ENCODE measurements at regions of chr21 and their contacts with region 1.

Region 1: DNA sequence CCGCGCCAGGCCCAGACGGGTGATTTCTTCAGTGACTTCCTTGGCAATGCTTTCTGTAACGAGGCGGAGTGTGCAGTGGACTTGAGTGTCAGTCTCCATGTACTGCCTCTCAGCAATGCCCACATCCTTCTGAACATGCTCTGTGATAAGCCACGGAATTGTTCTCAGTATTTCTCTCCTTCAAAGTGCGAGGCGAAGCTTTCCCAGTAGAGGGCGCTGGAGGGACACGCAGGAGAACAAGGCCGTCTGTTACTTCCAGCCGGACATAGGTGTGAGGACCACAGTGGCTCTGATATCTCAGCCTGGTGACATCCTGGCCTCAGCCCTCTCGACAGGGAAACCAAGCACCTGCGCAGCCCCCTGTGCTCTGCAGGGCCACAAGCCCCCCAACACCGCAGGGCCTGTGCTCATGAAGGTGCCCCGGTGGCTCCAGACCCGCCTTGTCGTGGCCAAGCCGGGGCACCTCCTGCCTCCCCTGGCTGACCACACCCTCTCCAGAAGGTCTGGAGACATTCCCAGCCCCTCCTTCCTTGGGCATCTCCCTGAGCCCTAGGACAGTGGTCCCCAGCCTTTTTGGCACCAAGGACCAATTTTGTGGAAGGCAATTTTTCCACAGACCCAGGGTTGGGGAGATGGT is 46.1 kb upstream of the BACE2 start:
- DNase-seq: peak; percentile 79
- H3K4me3 ChIP-seq: no peak overlapping the region
- H3K27ac ChIP-seq: no peak overlapping the region
- H3K4me1 ChIP-seq: no peaks in the 10 kb centered on the region
- H3K27me3 ChIP-seq: no peaks in the 10 kb centered on the region
- CTCF ChIP-seq: peak; percentile 85 to 90
- POLR2A ChIP-seq: no peak

Region 2: GRCh38 chr21:41133896-41134522 is 12.1 kb after region 1 on chr21:
- CTCF ChIA-PET with region 1: interaction called, 17 read pairs
- POLR2A ChIA-PET with region 1: no interaction called
- dilution Hi-C with region 1: no loop called
- intact Hi-C with region 1: no loop called
- DNase-seq: peak; percentile 39
- H3K4me3 ChIP-seq: no peak overlapping the region
- H3K27ac ChIP-seq: no peak overlapping the region
- H3K4me1 ChIP-seq: no peaks in the 10 kb centered on the region
- H3K27me3 ChIP-seq: peaks cover 0 to 2% of the 10 kb centered on the region in 2 experiments
- CTCF ChIP-seq: peak; percentile 12 to 40
- POLR2A ChIP-seq: no peak

Region 3: DNA sequence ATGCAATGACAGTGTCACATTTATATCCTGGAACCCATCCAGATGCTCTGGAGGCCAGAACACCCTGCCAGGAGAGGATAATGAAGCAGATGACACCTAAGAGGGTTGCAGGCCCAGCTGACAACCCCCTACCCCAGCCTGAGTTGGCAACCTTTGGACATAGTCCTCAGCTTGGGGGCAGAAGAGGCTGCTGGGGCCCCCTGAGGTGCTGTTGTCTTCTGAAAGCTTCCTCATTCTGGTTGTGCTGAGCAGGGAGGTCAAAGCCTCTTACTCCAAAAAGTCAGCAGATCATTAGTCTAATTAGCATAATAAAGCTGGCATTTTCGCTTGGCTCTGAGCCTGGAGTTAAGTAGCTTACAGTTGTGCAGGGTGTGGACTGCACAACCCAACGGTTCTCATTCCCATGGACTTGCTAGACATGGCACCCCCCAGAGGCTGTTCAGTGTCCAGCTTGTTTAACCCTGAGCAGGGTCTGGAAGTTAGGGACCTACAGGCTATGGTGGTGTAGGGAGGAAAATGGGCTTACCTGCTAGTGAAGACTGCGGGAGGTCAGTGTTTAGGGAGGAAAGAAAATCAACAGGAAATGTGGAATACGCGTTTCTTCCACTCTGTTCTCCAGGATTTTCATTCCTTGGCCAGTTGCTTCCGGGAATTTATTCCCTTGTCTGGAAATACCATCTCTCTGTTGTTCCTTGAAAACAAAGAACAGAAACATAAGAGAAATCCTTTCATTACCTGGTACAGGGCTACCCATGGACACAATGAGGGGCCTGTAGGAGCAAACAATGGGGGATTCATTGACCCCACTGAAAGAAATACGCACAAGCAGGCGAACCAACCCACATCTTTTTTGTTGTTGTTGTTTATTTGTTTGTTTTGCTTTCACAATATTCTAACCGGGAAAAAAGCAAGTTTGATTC is 25.8 kb after region 1 on chr21:
- CTCF ChIA-PET with region 1: no interaction called
- POLR2A ChIA-PET with region 1: interaction called, 11 read pairs
- dilution Hi-C with region 1: no loop called
- intact Hi-C with region 1: no loop called
- DNase-seq: no peak
- H3K4me3 ChIP-seq: no peak overlapping the region
- H3K27ac ChIP-seq: no peak overlapping the region
- H3K4me1 ChIP-seq: peaks cover 3% of the 10 kb centered on the region
- H3K27me3 ChIP-seq: no peaks in the 10 kb centered on the region
- CTCF ChIP-seq: no peak
- POLR2A ChIP-seq: no peak

Region 4: DNA sequence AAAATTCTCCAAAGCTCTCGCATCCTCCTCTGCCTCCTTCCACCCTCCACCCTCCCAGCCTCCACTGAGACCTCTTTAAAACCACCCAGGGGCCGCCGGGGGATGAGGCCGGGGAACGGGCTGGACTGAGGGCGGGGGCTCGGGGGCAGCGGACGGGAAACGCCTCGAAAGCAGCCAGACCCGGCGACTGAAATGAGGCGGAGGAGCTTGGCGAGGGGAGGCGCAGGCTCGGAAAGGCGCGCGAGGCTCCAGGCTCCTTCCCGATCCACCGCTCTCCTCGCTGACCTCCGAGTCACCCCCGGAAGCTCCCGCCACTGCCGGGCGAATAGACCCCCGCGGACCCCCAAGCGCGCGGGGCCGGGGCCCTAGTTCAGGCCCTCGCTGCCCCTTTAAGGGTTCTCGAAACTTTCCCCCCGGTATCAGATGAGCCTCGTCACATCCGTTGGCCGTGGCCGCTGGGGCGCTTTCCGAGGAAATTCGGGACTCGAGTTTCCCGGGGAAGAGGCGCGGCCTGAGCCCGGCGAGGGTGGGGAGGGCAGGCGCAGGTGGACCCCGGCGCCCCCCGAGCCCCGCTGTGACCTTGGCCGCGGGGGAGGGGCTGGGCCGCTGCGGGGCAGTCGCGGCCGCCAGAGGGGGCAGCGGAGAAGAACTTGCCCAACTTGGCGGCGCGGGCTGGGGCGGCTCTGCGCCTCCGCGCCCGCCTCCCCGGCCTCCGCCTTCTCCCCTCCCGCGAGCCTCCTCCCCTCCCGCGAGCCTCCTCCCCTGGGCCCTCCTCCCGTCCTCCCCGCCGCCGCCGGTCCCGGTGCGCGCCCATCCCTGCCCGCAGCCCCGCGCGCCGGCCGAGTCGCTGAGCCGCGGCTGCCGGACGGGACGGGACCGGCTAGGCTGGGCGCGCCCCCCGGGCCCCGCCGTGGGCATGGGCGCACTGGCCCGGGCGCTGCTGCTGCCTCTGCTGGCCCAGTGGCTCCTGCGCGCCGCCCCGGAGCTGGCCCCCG is 45.7 kb after region 1 on chr21 and contains the start of gene BACE2:
- CTCF ChIA-PET with region 1: interaction called, 20 read pairs
- POLR2A ChIA-PET with region 1: no interaction called
- dilution Hi-C with region 1: no loop called
- intact Hi-C with region 1: loop called (anchors 2 kb)
- DNase-seq: peak; percentile 72
- H3K4me3 ChIP-seq: peak within 1 kb of the TSS; percentile 77 to 95 (median 83)
- H3K27ac ChIP-seq: peak within 1 kb of the TSS; percentile 70
- H3K4me1 ChIP-seq: peaks cover 32% of the 10 kb centered on the region
- H3K27me3 ChIP-seq: no peaks in the 10 kb centered on the region
- CTCF ChIP-seq: peak; percentile 53 to 63
- POLR2A ChIP-seq: no peak
- total RNA-seq, gene BACE2: 128 and 184 TPM in 2 replicates

Region 5: DNA sequence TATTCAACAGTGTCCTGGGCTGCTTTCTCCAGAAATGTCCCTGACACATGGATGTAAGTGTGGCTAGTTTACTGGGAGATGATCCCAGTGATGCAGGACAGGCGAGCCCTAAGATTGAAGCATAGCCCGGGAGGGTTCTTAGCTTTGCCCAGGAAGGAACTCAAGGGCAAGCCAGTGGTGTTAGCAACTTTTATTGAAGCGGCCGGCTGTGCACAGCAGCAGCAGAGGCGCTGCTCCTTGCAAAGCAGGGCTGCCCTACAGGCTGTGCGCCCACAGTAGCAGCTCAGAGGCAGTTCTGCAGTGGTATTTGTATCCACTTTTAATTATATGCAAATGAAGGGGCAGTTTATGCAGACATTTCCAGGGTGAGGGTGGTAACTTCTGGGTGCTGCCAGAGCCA is 57.9 kb after region 1 on chr21:
- CTCF ChIA-PET with region 1: no interaction called
- POLR2A ChIA-PET with region 1: no interaction called
- dilution Hi-C with region 1: no loop called
- intact Hi-C with region 1: no loop called
- DNase-seq: no peak
- H3K4me3 ChIP-seq: no peak overlapping the region
- H3K27ac ChIP-seq: no peak overlapping the region
- H3K4me1 ChIP-seq: no peaks in the 10 kb centered on the region
- H3K27me3 ChIP-seq: no peaks in the 10 kb centered on the region
- CTCF ChIP-seq: no peak
- POLR2A ChIP-seq: no peak

Region 6: DNA sequence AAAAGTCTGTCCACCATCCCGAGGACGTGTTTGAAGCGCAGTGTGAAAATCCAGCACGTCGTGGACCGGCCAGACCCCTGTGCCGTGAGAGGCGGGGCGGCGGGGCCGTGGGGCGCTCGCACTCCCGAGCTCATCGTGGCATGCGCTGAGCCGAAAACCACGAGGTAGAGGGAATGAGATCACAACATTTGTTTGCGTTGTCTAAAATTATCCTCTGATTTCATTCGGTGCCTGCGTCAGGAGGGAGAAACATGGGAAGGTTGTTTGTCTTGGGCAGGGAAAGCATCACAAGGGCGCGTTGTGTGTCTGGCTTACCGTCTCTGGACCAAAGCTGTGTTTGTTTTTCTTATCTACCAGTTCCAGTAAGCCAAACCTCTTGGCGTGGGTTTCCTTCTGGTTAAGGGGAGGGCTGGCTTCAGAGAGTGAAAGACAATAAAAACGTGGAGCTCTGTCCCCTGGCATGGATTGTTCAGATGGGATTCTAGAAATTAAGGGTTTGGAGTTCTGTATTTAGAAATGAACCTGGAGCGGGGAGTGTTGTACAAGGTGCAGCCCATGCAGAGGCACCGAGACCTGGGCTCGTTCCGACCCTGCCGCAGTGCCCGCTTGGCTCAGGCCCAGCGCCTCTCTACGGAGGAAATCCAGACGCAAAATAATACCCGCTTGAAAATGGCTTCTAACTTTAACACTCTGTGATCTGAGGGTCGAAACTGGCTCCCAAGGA is 125.8 kb after region 1 on chr21:
- CTCF ChIA-PET with region 1: interaction called, 6 read pairs
- POLR2A ChIA-PET with region 1: no interaction called
- dilution Hi-C with region 1: no loop called
- intact Hi-C with region 1: loop called (anchors 1 kb)
- DNase-seq: peak; percentile 97
- H3K4me3 ChIP-seq: no peak overlapping the region
- H3K27ac ChIP-seq: peak overlapping the region; percentile 99
- H3K4me1 ChIP-seq: peaks cover 36% of the 10 kb centered on the region
- H3K27me3 ChIP-seq: no peaks in the 10 kb centered on the region
- CTCF ChIP-seq: no peak
- POLR2A ChIP-seq: no peak

Region 7: DNA sequence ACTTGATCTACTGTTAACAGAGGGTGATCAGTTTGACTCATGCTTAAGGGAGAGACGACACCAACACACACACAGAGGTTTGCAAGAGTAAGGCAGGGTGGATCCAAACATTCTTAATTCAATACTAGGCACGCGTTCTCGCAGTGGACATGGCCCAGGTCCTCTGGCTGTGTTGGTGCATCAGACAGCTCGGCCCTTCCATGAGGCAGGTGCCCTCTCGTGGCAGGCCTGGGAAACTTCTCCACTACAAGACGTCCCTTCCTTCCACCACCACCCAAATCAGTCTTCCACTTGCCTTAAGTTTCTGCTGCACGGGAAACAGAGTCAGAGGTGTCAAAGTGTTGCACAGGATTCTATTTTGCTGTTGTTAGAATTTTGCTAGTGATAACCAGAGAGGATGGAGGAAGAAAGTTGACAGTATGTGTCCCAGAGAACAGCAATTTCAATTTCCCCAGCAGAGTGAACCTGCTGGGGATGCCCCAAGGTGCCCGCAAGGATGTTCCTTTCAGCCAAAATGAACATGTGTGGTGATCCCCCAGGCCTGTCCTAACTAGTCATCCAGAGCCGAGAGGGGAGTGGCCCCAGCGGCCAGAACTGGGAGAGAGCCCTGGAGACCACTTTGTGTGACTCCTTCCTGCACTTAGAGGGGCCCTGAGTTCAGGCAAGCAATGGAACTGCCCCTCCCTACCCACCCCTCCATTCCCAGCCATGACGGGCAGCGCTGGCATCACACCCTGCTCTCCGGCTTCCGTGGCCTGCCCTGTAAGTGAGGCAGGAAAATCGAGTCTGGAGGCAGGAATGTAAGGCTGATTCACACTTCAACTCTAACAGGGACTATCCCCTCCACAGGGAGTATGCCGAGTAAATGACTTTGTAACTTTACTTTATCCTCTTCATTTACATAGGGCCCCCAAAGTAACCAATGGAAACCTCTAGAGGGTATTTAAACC is 338.9 kb after region 1 on chr21:
- CTCF ChIA-PET with region 1: interaction called, 3 read pairs
- POLR2A ChIA-PET with region 1: no interaction called
- dilution Hi-C with region 1: no loop called
- intact Hi-C with region 1: loop called (anchors 1 kb)
- DNase-seq: peak; percentile 56
- H3K4me3 ChIP-seq: no peak overlapping the region
- H3K27ac ChIP-seq: no peak overlapping the region
- H3K4me1 ChIP-seq: no peaks in the 10 kb centered on the region
- H3K27me3 ChIP-seq: no peaks in the 10 kb centered on the region
- CTCF ChIP-seq: peak; percentile 65 to 85
- POLR2A ChIP-seq: no peak

Region 8: DNA sequence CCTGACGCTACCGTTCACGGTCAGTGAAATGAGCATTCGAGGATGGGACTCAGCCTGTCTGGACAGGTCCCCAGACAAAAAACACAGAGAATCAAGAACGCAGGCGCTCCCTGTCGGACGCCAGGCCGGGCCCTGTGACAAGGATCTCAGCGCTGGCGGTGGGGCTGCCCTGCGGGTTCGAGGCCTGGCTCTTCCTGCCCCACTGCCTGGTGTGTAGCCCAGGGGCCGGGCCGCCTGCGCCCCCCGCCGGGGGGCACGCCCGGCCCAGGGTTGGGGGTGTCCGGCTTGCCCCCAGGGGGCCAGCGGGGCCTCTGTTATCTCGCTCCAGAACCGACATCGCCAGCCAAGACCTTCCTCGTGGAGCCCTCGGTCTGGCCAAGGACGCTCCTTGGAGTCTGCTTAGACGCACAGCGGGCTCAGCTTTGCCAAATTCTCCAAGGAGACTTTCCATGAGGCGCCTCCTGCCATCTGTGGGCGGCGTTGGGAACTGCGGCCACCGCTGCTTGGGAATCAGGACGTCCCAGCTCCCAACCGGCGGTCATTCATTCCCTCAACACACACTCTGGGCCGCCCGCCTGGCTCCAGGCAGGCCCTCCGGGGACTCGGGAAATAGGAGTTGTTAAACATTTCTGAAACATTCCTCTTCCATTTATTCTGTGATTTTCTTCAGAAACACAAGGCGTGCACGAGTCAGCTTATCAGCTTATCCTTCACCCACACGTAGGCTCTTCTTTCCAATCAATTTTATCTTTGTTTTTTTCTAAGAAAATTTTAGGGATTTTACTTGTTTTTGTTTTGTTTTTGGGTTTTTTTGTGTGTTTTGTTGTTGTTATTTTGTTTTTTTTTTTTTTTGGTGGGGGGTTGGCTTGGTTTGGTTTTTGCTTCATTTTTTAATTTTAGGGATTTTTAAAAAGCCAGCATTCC is 656.3 kb after region 1 on chr21:
- CTCF ChIA-PET with region 1: interaction called, 4 read pairs
- POLR2A ChIA-PET with region 1: no interaction called
- dilution Hi-C with region 1: no loop called
- intact Hi-C with region 1: loop called (anchors 5 kb)
- DNase-seq: peak; percentile 58
- H3K4me3 ChIP-seq: no peak overlapping the region
- H3K27ac ChIP-seq: no peak overlapping the region
- H3K4me1 ChIP-seq: no peaks in the 10 kb centered on the region
- H3K27me3 ChIP-seq: peaks cover 23 to 51% of the 10 kb centered on the region in 2 experiments
- CTCF ChIP-seq: peak; percentile 77 to 95
- POLR2A ChIP-seq: no peak

Region 9: DNA sequence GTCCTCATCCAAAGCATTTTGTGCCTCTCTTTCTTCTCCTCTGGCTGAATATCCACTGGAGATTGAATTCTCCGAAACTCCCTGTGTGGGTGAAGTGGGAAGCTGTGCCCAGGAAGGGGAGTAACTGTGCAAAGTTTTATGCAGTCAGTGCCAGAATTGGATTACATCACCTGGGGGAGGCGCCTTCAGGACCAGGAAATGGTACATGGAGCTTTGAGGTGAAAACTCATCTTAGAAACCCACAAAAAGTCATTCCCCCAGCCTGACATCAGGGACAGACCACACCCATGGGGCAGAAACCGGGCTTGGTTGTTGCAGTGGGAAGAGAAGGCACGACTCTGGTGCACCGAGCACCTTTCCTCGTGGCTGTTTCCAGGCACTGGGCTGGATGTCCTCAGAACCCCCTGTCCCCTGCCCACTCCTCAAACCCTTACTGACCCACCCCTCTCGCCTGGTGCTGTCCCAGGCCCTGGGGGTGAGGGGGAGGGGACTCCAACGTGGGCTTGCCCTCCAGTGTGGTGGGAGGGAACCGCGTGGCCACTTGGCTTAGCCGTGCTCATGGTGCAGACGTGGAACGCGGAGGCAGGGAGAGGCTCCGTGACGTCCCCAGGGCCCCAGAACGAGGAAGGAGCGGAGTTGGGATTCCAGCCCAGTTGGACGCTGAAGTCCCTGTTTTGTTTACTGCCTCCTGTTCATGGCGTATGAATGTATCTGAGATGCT is 1177.6 kb after region 1 on chr21:
- CTCF ChIA-PET with region 1: no interaction called
- POLR2A ChIA-PET with region 1: no interaction called
- dilution Hi-C with region 1: no loop called
- intact Hi-C with region 1: no loop called
- DNase-seq: no peak
- H3K4me3 ChIP-seq: no peak overlapping the region
- H3K27ac ChIP-seq: no peak overlapping the region
- H3K4me1 ChIP-seq: peaks cover 10% of the 10 kb centered on the region
- H3K27me3 ChIP-seq: no peaks in the 10 kb centered on the region
- CTCF ChIP-seq: no peak
- POLR2A ChIP-seq: no peak

Measured in endothelial cell of umbilical vein (primary cell).